ENCODE measurements at regions of chr17 and their contacts with region 1.

Region 1: DNA sequence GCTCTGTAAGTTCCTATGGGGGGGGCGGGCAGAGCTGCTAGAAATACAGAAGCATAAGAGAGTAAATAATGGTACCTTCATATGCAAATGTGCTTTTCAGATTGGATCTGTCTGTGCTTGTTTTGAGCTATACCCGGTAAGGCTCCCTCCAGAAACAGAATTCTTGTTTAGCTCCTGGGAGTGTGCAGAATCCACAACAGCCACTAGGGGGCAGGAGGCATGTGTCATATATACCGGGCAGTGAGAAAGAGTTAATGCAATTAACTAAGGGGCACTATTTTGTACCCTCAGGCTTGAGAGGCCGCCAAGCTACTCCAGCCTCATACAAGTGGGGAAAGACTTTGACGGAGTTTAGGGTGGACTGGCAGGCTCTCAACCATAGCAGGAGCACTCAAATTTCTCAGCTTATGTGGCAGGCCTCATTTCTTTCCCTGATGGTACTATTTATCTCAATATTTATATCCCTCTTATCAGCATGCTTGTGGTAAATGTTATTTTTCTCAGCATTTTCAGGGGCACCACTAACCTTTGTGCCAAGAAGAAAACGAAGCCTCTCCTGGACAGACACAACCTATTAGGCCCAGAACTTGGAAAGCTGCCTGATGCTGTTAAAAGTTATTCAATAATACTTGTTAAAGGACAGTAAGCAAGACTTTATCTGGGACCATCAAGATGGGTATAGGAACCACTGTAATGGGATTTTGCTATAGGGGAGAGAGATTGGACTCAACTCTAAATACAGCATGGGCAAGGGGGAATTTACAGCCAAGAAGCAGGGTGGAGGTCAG is 10.7 kb upstream of the CENPV start:
- DNase-seq: peak; percentile 91
- H3K4me3 Mint-ChIP-seq: no peak overlapping the region
- H3K27ac Mint-ChIP-seq: no peak overlapping the region
- H3K4me1 Mint-ChIP-seq: no peaks in the 10 kb centered on the region
- H3K27me3 Mint-ChIP-seq: no peaks in the 10 kb centered on the region

Region 2: DNA sequence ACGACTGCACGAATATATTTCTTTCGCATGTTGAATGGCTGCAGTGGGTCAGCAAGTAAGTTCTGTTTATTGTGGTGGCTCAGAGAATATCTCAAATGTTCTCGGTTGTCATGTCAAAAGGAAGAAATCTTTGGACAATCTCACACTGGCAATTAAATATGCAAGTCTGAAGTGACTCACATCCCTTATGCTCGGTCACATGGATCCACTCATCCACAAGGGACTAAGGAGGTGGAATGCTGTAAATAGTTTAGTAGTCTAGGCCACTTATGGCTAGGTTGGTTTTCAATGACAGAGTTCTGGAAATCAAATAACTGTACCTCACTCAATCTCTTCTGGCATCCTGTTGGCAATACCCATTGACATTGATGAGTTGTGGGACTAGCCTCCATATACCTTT is 1065.8 kb before region 1 on chr17:
- CTCF ChIA-PET with region 1: no interaction called
- intact Hi-C with region 1: no loop called
- DNase-seq: no peak
- H3K4me3 Mint-ChIP-seq: no peak overlapping the region
- H3K27ac Mint-ChIP-seq: no peak overlapping the region
- H3K4me1 Mint-ChIP-seq: no peaks in the 10 kb centered on the region
- H3K27me3 Mint-ChIP-seq: peaks cover 3% of the 10 kb centered on the region

Region 3: GRCh38 chr17:15456972-15457722 is 906.8 kb before region 1 on chr17:
- CTCF ChIA-PET with region 1: no interaction called
- intact Hi-C with region 1: no loop called
- DNase-seq: no peak
- H3K4me3 Mint-ChIP-seq: no peak overlapping the region
- H3K27ac Mint-ChIP-seq: no peak overlapping the region
- H3K4me1 Mint-ChIP-seq: no peaks in the 10 kb centered on the region
- H3K27me3 Mint-ChIP-seq: no peaks in the 10 kb centered on the region

Region 4: GRCh38 chr17:16313139-16314090 is 50.5 kb before region 1 on chr17:
- CTCF ChIA-PET with region 1: no interaction called
- intact Hi-C with region 1: no loop called
- DNase-seq: no peak
- H3K4me3 Mint-ChIP-seq: no peak overlapping the region
- H3K27ac Mint-ChIP-seq: no peak overlapping the region
- H3K4me1 Mint-ChIP-seq: peaks cover 8% of the 10 kb centered on the region
- H3K27me3 Mint-ChIP-seq: no peaks in the 10 kb centered on the region

Region 5: DNA sequence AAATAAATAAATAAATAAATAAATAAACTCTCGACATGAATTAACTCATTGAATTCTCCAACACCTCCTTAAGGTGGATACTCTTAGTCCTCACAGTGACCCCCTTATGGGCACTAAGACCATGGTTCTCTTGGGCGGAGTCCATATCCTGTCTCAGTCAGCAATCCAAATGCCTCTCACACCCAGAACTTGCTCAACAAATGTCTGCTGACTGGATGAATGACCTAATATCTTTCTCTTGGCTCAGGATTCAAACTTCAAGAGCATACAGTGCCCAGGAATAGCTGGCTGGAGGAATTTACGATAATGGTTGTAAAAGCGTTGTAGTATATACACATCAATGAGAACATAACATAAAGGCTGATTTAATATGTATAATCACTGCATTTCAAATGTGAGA is 10.2 kb after region 1 on chr17:
- CTCF ChIA-PET with region 1: interaction called, 17 read pairs
- intact Hi-C with region 1: no loop called
- DNase-seq: no peak
- H3K4me3 Mint-ChIP-seq: no peak overlapping the region
- H3K27ac Mint-ChIP-seq: no peak overlapping the region
- H3K4me1 Mint-ChIP-seq: no peaks in the 10 kb centered on the region
- H3K27me3 Mint-ChIP-seq: no peaks in the 10 kb centered on the region

Region 6: GRCh38 chr17:16415031-16415924 is 51.3 kb after region 1 on chr17 and contains the start of gene TRPV2:
- CTCF ChIA-PET with region 1: interaction called, 46 read pairs
- intact Hi-C with region 1: loop called (anchors 1 kb)
- DNase-seq: peak; percentile 67
- H3K4me3 Mint-ChIP-seq: peak within 1 kb of the TSS; percentile 98
- H3K27ac Mint-ChIP-seq: peak within 1 kb of the TSS; percentile 100
- H3K4me1 Mint-ChIP-seq: peaks cover 43% of the 10 kb centered on the region
- H3K27me3 Mint-ChIP-seq: no peaks in the 10 kb centered on the region
- total RNA-seq, gene TRPV2: 23.7 to 24.8 TPM

Region 7: DNA sequence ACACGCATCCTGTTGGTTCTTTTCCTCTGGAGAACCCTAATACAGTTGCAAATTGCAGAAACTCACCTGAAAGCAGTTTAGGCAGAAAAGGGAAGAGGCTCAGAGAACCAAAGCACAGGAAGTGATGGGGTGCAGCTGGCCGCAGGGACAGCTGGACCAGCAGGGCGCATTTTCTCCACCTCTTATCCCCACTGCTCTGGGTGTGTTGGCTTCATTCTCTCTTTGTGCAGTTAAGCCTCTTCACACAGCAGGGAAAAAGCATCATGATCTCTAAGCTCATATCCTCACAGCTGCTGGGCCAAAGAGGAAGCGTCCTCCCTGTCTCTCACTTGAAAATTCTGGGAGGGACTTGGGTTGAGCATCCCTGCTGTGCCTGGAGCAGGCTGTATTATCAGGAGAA is 148.1 kb after region 1 on chr17:
- CTCF ChIA-PET with region 1: interaction called, 12 read pairs
- intact Hi-C with region 1: no loop called
- DNase-seq: no peak
- H3K4me3 Mint-ChIP-seq: no peak overlapping the region
- H3K27ac Mint-ChIP-seq: no peak overlapping the region
- H3K4me1 Mint-ChIP-seq: peaks cover 5% of the 10 kb centered on the region
- H3K27me3 Mint-ChIP-seq: peaks cover 9% of the 10 kb centered on the region

Region 8: GRCh38 chr17:16589097-16589969 is 225.4 kb after region 1 on chr17:
- CTCF ChIA-PET with region 1: interaction called, 3 read pairs
- intact Hi-C with region 1: loop called (anchors 1 kb)
- DNase-seq: peak; percentile 94
- H3K4me3 Mint-ChIP-seq: peak overlapping the region; percentile 69
- H3K27ac Mint-ChIP-seq: no peak overlapping the region
- H3K4me1 Mint-ChIP-seq: peaks cover 3% of the 10 kb centered on the region
- H3K27me3 Mint-ChIP-seq: peaks cover 22% of the 10 kb centered on the region

Region 9: GRCh38 chr17:16945663-16946218 is 581.8 kb after region 1 on chr17:
- CTCF ChIA-PET with region 1: no interaction called
- intact Hi-C with region 1: no loop called
- DNase-seq: no peak
- H3K4me3 Mint-ChIP-seq: no peak overlapping the region
- H3K27ac Mint-ChIP-seq: no peak overlapping the region
- H3K4me1 Mint-ChIP-seq: no peaks in the 10 kb centered on the region
- H3K27me3 Mint-ChIP-seq: no peaks in the 10 kb centered on the region